Activated CD4-positive, alpha-beta T cell treated with anti-CD3 and anti-CD28 coated beads, Interleukin-2, amount 10 ng/mL, durations not matched to agents 24 days and 14 days (primary cell): ENCODE measurements at regions of chr6 and their contacts with region 1.

Region 1: GRCh38 chr6:53544470-53545308 is at the start of gene GCLC:
- DNase-seq: peak; percentile 96
- H3K4me3 Mint-ChIP-seq: peak within 1 kb of the TSS; percentile 95
- H3K27ac Mint-ChIP-seq: peak within 1 kb of the TSS; percentile 95
- H3K4me1 Mint-ChIP-seq: peaks cover 35% of the 10 kb centered on the region
- H3K27me3 Mint-ChIP-seq: peaks cover 19% of the 10 kb centered on the region
- total RNA-seq, gene GCLC: 21.3 and 25.0 TPM in 2 replicates

Region 2: GRCh38 chr6:53348371-53349208 is 196.1 kb before region 1 on chr6 and contains the start of gene ELOVL5:
- intact Hi-C with region 1: loop called (anchors 5 kb)
- DNase-seq: peak; percentile 99
- H3K4me3 Mint-ChIP-seq: peak within 1 kb of the TSS; percentile 93
- H3K27ac Mint-ChIP-seq: peak within 1 kb of the TSS; percentile 92
- H3K4me1 Mint-ChIP-seq: peaks cover 40% of the 10 kb centered on the region
- H3K27me3 Mint-ChIP-seq: peaks cover 19% of the 10 kb centered on the region
- total RNA-seq, gene ELOVL5: 122 and 126 TPM in 2 replicates

Region 3: DNA sequence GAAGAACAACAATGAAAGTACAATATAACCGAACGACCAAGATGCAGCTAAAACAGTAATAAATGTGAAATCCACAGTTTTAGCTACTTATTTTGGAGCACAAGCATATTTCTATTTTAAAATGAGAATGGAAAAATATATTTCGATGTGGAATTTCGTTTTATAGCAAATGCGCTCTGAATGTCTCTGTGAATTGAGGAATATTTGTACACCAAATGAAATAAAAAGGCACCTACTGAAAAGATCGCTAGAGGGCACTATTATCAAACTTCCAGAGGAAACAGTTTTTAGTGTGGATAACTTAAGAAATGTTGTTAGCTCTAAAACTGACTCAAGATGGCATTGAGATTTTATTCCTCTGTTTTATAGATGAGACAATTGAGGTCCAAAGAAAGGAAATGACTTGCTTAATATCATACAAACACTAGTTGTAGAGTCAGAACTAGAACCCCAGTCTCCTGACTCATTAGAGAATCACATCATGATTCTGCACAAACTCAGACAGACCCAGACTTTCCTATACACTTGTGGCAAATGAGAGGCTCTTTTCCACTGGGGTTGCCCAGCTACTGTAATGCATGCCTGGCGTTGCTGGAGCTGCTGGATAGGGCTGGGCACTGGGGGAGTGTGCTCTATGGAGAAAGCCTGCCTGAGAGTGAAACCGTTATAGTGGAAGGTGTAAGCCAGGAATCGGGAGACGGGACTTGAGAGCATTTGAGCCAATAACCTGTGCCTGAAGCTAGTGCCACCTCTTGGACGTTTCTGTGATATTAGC is 51.6 kb before region 1 on chr6:
- intact Hi-C with region 1: loop called (anchors 1 kb)
- DNase-seq: peak; percentile 69
- H3K4me3 Mint-ChIP-seq: no peak overlapping the region
- H3K27ac Mint-ChIP-seq: peak overlapping the region; percentile 66
- H3K4me1 Mint-ChIP-seq: peaks cover 7% of the 10 kb centered on the region
- H3K27me3 Mint-ChIP-seq: peaks cover 21% of the 10 kb centered on the region

Region 4: DNA sequence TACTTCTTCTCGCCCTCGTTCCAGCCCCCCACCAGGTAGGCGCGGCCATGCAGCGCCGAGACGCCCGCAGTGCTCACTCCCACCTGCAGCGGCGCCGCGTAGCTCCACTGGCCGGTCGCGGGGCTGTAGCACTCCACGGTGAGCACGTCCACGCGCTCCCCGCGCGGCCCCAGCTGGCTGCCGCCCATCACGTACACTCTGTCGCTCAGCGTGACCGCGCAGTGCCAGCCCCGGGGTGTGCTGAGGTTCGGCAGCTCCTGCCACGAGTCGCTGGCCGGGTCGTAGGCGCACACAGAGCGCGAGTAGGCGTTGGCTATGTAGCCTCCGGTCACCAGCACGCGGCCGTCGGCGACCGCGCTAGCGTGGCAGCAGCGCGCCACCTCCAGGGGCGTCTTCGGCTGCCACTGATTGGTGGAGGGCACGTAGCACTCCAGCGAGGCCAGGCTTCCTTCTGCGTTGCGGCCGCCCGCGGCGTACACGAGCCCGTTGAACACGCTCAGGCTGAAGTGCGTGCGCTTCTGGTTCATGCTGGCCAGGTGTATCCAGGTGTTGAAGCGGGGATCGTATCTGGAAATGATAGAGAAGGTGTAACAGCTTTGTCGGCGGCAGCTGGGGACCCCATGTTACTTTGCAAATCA is 107.2 kb after region 1 on chr6:
- intact Hi-C with region 1: loop called (anchors 1 kb)
- DNase-seq: peak; percentile 92
- H3K4me3 Mint-ChIP-seq: peak overlapping the region; percentile 90
- H3K27ac Mint-ChIP-seq: peak overlapping the region; percentile 95
- H3K4me1 Mint-ChIP-seq: peaks cover 22% of the 10 kb centered on the region
- H3K27me3 Mint-ChIP-seq: peaks cover 23% of the 10 kb centered on the region

Region 5: DNA sequence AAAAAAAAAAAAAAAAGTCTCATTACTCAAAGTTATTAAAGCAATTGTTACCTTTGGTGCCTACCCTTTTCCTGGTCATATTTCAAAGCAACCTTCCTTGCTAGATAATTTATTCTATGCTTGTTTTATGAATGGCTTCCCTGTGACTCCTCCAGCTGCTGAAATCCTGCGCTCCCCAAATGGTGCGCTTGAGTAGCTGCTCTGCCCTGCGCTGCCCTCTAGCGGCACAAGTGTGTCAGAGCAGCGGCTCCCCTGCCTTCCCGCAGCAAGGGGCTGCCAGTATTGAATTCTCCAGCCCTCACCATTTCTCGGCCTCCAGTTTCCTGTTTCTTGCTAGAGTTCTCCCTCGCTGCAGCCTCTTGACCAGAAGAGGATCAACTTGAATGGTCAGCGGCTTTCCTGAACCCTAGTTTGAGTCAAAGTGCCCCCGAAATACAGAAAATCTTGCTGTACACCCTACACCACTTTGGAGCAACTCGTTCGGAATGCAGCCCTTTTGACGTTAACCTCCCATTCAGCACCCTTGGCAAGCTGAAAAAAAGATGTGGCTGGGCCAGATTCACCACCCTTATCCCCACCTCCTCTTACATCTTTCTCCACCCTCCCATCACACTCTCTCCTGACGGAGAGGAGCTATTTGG is 181.2 kb after region 1 on chr6:
- intact Hi-C with region 1: loop called (anchors 2 kb)
- DNase-seq: peak; percentile 93
- H3K4me3 Mint-ChIP-seq: no peak overlapping the region
- H3K27ac Mint-ChIP-seq: no peak overlapping the region
- H3K4me1 Mint-ChIP-seq: peaks cover 8% of the 10 kb centered on the region
- H3K27me3 Mint-ChIP-seq: peaks cover 23% of the 10 kb centered on the region